Activated CD4-positive, alpha-beta memory T cell treated with anti-CD3 and anti-CD28 coated beads for 36 hours (primary cell): ENCODE measurements at regions of chr18 and their contacts with region 1.

Region 1: DNA sequence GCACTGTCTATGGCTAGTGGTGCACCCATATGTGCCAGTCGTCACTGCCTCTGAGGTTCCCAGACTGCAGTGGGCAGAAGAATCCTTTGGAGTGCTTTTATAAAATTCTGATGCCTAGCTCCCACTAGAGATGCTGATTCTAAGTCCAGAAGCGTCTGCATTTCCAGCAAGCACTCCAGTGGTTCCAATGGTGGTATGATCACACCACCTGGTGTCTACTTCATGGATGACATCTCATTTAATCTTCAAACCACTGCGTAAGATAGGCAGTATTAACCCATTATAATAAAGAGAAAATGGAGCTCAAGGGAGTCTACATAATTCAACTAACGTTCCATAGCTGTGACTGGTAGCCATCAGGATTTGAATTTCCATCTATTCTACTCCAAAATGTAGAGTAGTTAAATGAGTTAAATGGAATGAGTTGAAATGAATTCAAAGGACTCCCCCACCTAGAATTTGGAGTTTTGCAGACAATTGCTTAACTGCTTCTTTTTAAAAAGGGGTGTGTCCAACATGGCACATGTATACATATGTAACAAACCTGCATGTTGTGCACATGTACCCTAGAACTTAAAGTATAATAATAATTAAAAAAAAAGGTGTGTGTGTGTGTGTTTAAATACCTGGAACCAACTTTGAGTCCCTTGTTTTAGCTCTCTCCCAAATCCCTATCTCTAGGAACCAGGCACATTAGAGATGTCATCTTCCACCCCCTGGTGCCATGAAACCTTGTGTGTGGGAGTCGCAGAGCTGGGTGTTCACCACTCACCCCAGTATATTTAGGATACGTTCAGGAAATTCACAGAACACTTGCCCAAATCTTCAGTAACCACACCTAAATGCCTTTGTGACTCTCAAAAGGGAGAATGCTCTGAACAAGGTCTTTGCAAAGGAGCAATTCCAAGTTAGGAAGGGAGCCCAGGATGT is 14.1 kb downstream of the LAMA3 start:
- DNase-seq: peak; percentile 21
- H3K4me3 Mint-ChIP-seq: no peak overlapping the region
- H3K27ac Mint-ChIP-seq: no peak overlapping the region
- H3K4me1 Mint-ChIP-seq: no peaks in the 10 kb centered on the region
- H3K27me3 Mint-ChIP-seq: peaks cover 9% of the 10 kb centered on the region

Region 2: DNA sequence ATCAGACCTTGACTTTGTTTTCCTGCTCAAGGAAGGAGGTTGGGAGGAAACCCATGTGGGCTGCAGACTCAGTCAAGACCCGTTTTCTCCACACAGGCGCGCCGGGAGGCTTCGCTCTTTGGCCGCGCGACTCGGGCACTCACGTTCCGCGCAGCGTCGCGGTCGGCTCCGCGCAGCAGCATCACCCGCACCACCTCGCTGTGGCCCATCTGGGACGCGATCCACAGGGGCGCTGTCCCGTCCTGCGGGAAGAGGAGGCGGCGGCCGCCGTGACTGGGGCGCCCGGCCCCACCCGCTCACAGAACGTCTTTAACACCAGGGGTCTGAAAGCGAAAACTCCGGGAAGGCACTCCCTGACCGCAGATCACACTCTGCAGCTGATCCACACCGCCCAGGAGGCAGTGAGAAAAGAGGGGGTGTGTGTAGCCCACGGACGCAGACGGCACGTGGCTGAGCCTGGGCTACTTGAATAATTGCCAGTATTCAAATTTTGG is 83.9 kb before region 1 on chr18:
- CTCF ChIA-PET with region 1: interaction called, 94 read pairs
- POLR2A ChIA-PET with region 1: no interaction called
- intact Hi-C with region 1: loop called (anchors 1 kb)
- DNase-seq: peak; percentile 15
- H3K4me3 Mint-ChIP-seq: peak overlapping the region; percentile 48
- H3K27ac Mint-ChIP-seq: no peak overlapping the region
- H3K4me1 Mint-ChIP-seq: peaks cover 7% of the 10 kb centered on the region
- H3K27me3 Mint-ChIP-seq: peaks cover 30% of the 10 kb centered on the region

Region 3: GRCh38 chr18:23662309-23663263 is 40.7 kb before region 1 on chr18 and contains the start of gene ANKRD29:
- CTCF ChIA-PET with region 1: interaction called, 6 read pairs
- POLR2A ChIA-PET with region 1: no interaction called
- intact Hi-C with region 1: loop called (anchors 5 kb)
- DNase-seq: peak; percentile 76
- H3K4me3 Mint-ChIP-seq: peak within 1 kb of the TSS; percentile 80
- H3K27ac Mint-ChIP-seq: no peak within 1 kb of the TSS
- H3K4me1 Mint-ChIP-seq: peaks cover 16% of the 10 kb centered on the region
- H3K27me3 Mint-ChIP-seq: peaks cover 24% of the 10 kb centered on the region
- total RNA-seq, gene ANKRD29: not detected

Region 4: GRCh38 chr18:23714576-23714975 is 11.3 kb after region 1 on chr18:
- CTCF ChIA-PET with region 1: interaction called, 12 read pairs
- POLR2A ChIA-PET with region 1: no interaction called
- intact Hi-C with region 1: no loop called
- DNase-seq: no peak
- H3K4me3 Mint-ChIP-seq: no peak overlapping the region
- H3K27ac Mint-ChIP-seq: no peak overlapping the region
- H3K4me1 Mint-ChIP-seq: peaks cover 14% of the 10 kb centered on the region
- H3K27me3 Mint-ChIP-seq: no peaks in the 10 kb centered on the region

Region 5: GRCh38 chr18:23918401-23919032 is 215.2 kb after region 1 on chr18:
- CTCF ChIA-PET with region 1: interaction called, 11 read pairs
- POLR2A ChIA-PET with region 1: no interaction called
- intact Hi-C with region 1: no loop called
- DNase-seq: peak; percentile 83
- H3K4me3 Mint-ChIP-seq: no peak overlapping the region
- H3K27ac Mint-ChIP-seq: no peak overlapping the region
- H3K4me1 Mint-ChIP-seq: peaks cover 16% of the 10 kb centered on the region
- H3K27me3 Mint-ChIP-seq: no peaks in the 10 kb centered on the region

Region 6: GRCh38 chr18:24462838-24463775 is 759.8 kb after region 1 on chr18:
- CTCF ChIA-PET with region 1: no interaction called
- POLR2A ChIA-PET with region 1: no interaction called
- intact Hi-C with region 1: no loop called
- DNase-seq: no peak
- H3K4me3 Mint-ChIP-seq: no peak overlapping the region
- H3K27ac Mint-ChIP-seq: no peak overlapping the region
- H3K4me1 Mint-ChIP-seq: peaks cover 20% of the 10 kb centered on the region
- H3K27me3 Mint-ChIP-seq: peaks cover 3% of the 10 kb centered on the region